PC-9 (cell line): ENCODE measurements at regions of chr9 and their contacts with region 1.

Region 1: DNA sequence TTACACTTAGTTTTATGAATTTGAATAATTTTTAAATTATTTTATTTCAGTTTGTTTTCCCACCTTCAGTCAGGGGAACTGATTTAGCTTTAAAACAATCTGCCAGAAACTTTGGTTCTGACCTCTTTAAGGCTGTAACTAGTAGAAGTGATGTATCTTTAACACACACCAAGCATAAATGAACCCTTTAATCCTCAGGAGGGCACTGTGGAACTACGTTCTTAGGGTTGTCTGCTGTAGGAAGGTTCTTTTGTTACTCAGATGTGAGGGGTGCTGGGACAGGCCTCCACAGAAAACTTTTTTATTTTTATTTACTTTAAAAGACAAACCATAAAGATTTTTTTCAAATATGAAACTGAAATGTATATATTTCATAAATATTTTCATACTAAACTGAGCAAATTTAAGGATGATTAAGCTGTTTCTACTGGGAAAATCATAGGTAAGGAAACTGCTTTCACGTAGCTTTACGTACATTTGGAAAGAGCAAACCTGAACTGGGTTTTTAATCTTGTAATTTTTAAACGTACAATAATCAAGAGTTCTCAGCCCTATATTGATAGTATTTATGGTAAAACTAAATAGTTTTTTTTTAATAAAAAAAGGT is 5.3 kb downstream of the KLF4 start:
- DNase-seq: peak; percentile 42 to 65
- H3K4me3 ChIP-seq: peak overlapping the region; percentile 100; the same call in 1 of the 2 replicates
- H3K27ac ChIP-seq: 0 out of 2 replicates have a peak overlapping the region, but pooled peaks have one; percentile 50
- H3K4me1 ChIP-seq: peaks cover 45% of the 10 kb centered on the region
- H3K27me3 ChIP-seq: no peaks in the 10 kb centered on the region
- CTCF ChIP-seq: peak; percentile 72

Region 2: DNA sequence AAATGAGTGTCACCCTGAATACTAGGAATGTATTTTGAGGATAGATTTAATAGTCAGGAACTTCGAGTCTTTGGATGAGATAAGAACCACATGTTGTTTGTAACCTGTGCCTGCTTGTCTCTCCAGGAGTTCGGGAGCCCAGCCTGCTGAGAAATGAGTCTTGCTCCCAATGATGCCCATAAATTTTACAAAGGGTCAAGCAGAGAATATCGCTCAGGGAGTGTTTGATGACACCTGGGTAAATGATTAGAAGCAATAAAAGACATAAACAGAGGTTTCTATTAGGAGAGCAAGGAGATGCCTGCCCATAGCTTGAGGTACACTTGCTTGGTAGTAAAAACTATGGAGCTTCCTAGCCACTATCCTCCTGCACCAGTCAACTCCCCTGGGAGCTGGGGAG is 52.2 kb after region 1 on chr9:
- CTCF ChIA-PET with region 1: no interaction called
- POLR2A ChIA-PET with region 1: no interaction called
- intact Hi-C with region 1: no loop called
- DNase-seq: no peak
- H3K4me3 ChIP-seq: no peak overlapping the region
- H3K27ac ChIP-seq: no peak overlapping the region
- H3K4me1 ChIP-seq: peaks cover 8% of the 10 kb centered on the region; the same call in 1 of the 2 replicates
- H3K27me3 ChIP-seq: no peaks in the 10 kb centered on the region
- CTCF ChIP-seq: no peak

Region 3: GRCh38 chr9:107546859-107547258 is 62.6 kb after region 1 on chr9:
- CTCF ChIA-PET with region 1: no interaction called
- POLR2A ChIA-PET with region 1: no interaction called
- intact Hi-C with region 1: no loop called
- DNase-seq: no peak
- H3K4me3 ChIP-seq: no peak overlapping the region
- H3K27ac ChIP-seq: no peak overlapping the region
- H3K4me1 ChIP-seq: peaks cover 21% of the 10 kb centered on the region
- H3K27me3 ChIP-seq: no peaks in the 10 kb centered on the region
- CTCF ChIP-seq: no peak

Region 4: DNA sequence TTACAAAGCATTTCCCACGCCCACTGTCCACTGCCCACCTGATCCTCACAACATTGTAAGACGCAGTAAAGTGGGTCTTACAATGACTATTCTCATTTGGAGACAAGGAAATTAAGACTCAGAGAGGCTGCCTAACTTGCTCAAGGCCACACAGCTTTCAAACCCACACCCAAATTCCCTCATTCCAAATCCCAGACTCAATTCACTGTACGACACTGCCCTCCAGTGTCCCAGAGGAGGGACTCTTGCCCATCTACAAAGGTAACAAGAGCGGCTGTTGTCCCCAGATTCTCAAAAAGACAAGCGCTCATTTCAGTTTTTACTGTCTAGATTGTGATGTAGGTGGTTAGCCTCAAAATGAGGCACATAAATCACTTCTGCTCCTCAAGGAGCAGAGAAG is 1187.0 kb after region 1 on chr9:
- CTCF ChIA-PET with region 1: no interaction called
- POLR2A ChIA-PET with region 1: no interaction called
- intact Hi-C with region 1: loop called (anchors 5 kb)
- DNase-seq: no peak
- H3K4me3 ChIP-seq: no peak overlapping the region
- H3K27ac ChIP-seq: no peak overlapping the region
- H3K4me1 ChIP-seq: peaks cover 10% of the 10 kb centered on the region
- H3K27me3 ChIP-seq: no peaks in the 10 kb centered on the region
- CTCF ChIP-seq: peak; percentile 69